Heart right ventricle (tissue), 16 donors: ENCODE measurements at regions of chr21 and their contacts with region 1.

Region 1: DNA sequence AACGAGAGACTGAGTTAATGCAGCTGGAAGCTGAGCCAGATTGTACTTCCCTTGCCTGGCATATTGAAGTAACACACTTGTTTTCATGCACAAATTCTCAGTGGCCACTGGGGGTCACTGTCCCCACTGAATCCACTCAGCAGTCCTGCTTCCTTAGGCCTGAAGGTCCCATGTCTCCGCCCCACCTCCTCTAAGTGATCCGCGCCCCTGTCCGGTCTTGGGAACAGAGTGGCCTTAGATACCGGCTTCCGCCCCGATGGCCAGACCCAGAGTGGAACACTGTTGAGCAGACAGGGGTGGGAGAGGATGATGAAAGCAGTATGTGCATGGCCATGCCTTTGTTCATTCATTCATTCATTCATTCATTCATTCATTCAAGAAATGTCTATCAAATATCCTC is 34.8 kb downstream of the CHAF1B start:
- DNase-seq: peak; percentile 74 to 85
- ATAC-seq: peak; percentile 86 to 96 (median 92)
- H3K4me3 ChIP-seq: no peak overlapping the region
- H3K27ac ChIP-seq: no peak overlapping the region
- H3K4me1 ChIP-seq: peaks cover 0 to 17% (median 13%) of the 10 kb centered on the region in 9 donors
- H3K27me3 ChIP-seq: no peaks in the 10 kb centered on the region
- CTCF ChIP-seq: peak; percentile 68 to 88 (median 80)

Region 2: DNA sequence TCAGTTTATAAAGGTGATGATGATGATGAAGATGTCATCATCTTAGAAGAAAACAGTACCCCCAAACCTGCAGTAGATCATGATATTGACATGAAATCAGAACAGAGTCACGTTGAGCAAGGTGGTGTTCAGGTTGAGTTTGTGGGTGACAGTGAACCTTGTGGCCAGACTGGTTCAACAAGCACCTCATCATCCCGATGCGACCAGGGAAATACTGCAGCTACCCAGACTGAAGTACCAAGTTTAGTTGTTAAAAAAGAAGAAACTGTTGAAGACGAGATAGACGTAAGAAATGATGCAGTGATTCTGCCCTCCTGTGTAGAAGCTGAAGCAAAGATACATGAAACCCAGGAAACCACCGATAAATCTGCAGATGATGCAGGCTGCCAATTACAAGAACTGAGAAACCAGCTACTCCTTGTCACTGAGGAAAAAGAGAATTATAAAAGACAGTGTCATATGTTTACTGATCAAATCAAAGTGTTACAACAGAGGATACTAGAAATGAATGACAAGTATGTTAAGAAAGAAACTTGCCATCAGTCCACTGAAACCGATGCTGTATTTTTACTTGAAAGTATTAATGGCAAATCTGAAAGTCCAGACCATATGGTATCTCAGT is 50.8 kb before region 1 on chr21:
- intact Hi-C with region 1: no loop called
- DNase-seq: no peak
- ATAC-seq: no peak
- H3K4me3 ChIP-seq: no peak overlapping the region
- H3K27ac ChIP-seq: no peak overlapping the region
- H3K4me1 ChIP-seq: no peaks in the 10 kb centered on the region
- H3K27me3 ChIP-seq: no peaks in the 10 kb centered on the region
- CTCF ChIP-seq: no peak

Region 3: GRCh38 chr21:36591326-36591970 is 171.5 kb after region 1 on chr21:
- intact Hi-C with region 1: loop called in 1 of 10 experiments (anchors 5 kb)
- DNase-seq: no peak
- ATAC-seq: no peak
- H3K4me3 ChIP-seq: no peak overlapping the region
- H3K27ac ChIP-seq: no peak overlapping the region
- H3K4me1 ChIP-seq: peaks cover 0 to 6% (median 0%) of the 10 kb centered on the region in 9 donors
- H3K27me3 ChIP-seq: peaks cover 0 to 43% (median 19%) of the 10 kb centered on the region in 7 donors
- CTCF ChIP-seq: no peak

Region 4: GRCh38 chr21:36934864-36935420 is 514.9 kb after region 1 on chr21:
- intact Hi-C with region 1: loop called in 4 of 10 experiments (anchors 5 to 10 kb)
- DNase-seq: no peak
- ATAC-seq: no peak
- H3K4me3 ChIP-seq: no peak overlapping the region
- H3K27ac ChIP-seq: no peak overlapping the region
- H3K4me1 ChIP-seq: peaks cover 0 to 11% (median 3%) of the 10 kb centered on the region in 9 donors
- H3K27me3 ChIP-seq: no peaks in the 10 kb centered on the region
- CTCF ChIP-seq: no peak

Region 5: DNA sequence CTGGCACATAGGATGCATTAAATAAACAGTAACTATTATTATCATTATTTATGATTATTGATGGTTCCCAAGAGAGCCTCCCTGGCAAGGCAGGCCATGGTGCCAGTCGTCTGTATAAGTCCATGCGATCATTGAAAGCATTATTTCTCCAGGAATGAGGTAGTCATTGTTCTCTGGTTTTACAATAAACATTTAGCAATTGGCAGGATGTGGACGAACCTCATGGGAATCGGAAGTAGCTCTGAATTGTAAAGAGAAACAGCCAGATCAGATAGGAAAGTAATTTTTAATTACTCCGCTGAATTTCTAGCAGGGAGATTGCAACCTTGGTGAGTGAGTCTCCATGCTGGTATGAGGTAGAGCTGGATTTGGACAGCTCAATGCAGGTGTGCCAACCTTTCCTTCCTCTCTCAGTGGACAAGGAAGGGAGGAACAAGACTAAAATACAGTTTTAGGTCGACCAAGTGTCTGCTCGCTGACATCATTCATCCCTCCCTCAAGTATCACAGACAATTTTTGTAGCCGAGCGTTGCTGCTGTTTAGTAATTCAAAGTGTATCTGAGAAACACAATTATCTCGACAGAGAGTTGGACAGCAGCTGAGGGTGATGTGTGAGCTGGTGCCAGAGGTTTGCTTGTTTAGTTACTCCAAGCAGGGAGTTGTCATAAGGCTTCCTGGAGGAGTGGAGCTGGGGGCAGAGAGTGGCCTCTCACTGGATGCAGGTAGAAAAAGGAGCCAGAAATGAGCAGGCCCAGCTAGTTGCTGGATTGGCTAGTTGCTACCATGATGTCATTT is 1245.4 kb after region 1 on chr21:
- intact Hi-C with region 1: loop called in 1 of 10 experiments (anchors 5 kb)
- DNase-seq: no peak
- ATAC-seq: peak in 6 of 8 donors; percentile 50 to 75 (median 63)
- H3K4me3 ChIP-seq: no peak overlapping the region
- H3K27ac ChIP-seq: peak overlapping the region in 7 of 10 donors; percentile 6 to 75 (median 32)
- H3K4me1 ChIP-seq: peaks cover 0 to 23% (median 7%) of the 10 kb centered on the region in 9 donors
- H3K27me3 ChIP-seq: no peaks in the 10 kb centered on the region
- CTCF ChIP-seq: no peak